ENCODE measurements at regions of chr11 and their contacts with region 1.

Region 1: GRCh38 chr11:73779084-73779902 is 8.4 kb upstream of the MRPL48 start:
- DNase-seq: peak; percentile 98 to 99
- ATAC-seq: peak; percentile 100
- H3K4me3 ChIP-seq: peak overlapping the region; percentile 1 to 65 (median 56)
- H3K27ac ChIP-seq: peak overlapping the region; percentile 59 to 97 (median 92)
- H3K4me1 ChIP-seq: peaks cover 0 to 12% (median 4%) of the 10 kb centered on the region in 9 donors
- H3K27me3 ChIP-seq: no peaks in the 10 kb centered on the region
- CTCF ChIP-seq: no peak

Region 2: GRCh38 chr11:73760679-73761402 is 18.5 kb before region 1 on chr11 and contains the start of gene RAB6A:
- intact Hi-C with region 1: loop called in 7 of 10 experiments (anchors 1 to 2 kb)
- DNase-seq: peak; percentile 100
- ATAC-seq: peak; percentile 95 to 98 (median 97)
- H3K4me3 ChIP-seq: peak within 1 kb of the TSS; percentile 87 to 99 (median 97)
- H3K27ac ChIP-seq: peak within 1 kb of the TSS; percentile 95 to 99 (median 98)
- H3K4me1 ChIP-seq: peaks cover 3 to 40% (median 31%) of the 10 kb centered on the region in 9 donors
- H3K27me3 ChIP-seq: no peaks in the 10 kb centered on the region
- CTCF ChIP-seq: peak in 8 of 9 donors; percentile 9 to 56 (median 41)
- total RNA-seq, gene RAB6A: 96.5 to 137 (median 120) TPM

Measured in heart right ventricle (tissue), 16 donors.